Endothelial cell of umbilical vein (primary cell): ENCODE measurements at regions of chr20 and their contacts with region 1.

Region 1: GRCh38 chr20:23340524-23340923 is 10.1 kb upstream of the NXT1 start:
- DNase-seq: peak; percentile 84
- H3K4me3 ChIP-seq: no peak overlapping the region
- H3K27ac ChIP-seq: no peak overlapping the region
- H3K4me1 ChIP-seq: no peaks in the 10 kb centered on the region
- H3K27me3 ChIP-seq: peaks cover 2 to 3% of the 10 kb centered on the region in 2 experiments
- CTCF ChIP-seq: peak; percentile 64 to 71
- POLR2A ChIP-seq: no peak

Region 2: GRCh38 chr20:22339091-22339881 is 1001.2 kb before region 1 on chr20:
- CTCF ChIA-PET with region 1: interaction called, 16 read pairs
- POLR2A ChIA-PET with region 1: no interaction called
- dilution Hi-C with region 1: no loop called
- intact Hi-C with region 1: loop called (anchors 1 kb)
- DNase-seq: peak; percentile 64
- H3K4me3 ChIP-seq: no peak overlapping the region
- H3K27ac ChIP-seq: no peak overlapping the region
- H3K4me1 ChIP-seq: no peaks in the 10 kb centered on the region
- H3K27me3 ChIP-seq: peaks cover 5 to 10% of the 10 kb centered on the region in 2 experiments
- CTCF ChIP-seq: peak; percentile 60 to 61
- POLR2A ChIP-seq: no peak

Region 3: GRCh38 chr20:22700367-22700766 is 640.2 kb before region 1 on chr20:
- CTCF ChIA-PET with region 1: interaction called, 222 read pairs
- POLR2A ChIA-PET with region 1: no interaction called
- dilution Hi-C with region 1: no loop called
- intact Hi-C with region 1: no loop called
- DNase-seq: no peak
- H3K4me3 ChIP-seq: no peak overlapping the region
- H3K27ac ChIP-seq: no peak overlapping the region
- H3K4me1 ChIP-seq: peaks cover 14% of the 10 kb centered on the region
- H3K27me3 ChIP-seq: no peaks in the 10 kb centered on the region
- CTCF ChIP-seq: no peak
- POLR2A ChIP-seq: no peak

Region 4: DNA sequence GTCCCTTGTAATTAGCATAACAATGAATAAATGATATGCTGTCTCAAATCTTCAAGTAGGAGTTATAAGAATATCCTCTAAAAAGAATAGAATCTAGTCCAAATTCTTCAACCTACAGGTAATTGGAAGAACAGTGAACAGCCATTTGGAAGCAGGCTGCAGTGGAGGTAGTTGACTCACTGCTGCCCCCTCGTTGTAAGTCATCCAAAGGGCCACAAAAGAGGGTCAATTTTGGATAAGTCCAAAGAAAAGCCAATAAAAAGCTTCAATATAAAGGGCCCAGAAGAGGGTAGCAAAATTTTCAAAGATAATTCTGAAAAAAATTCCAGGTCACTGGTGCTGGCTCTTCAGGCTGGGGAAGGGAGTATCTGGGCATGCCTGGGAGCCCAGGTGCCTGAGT is 366.2 kb before region 1 on chr20:
- CTCF ChIA-PET with region 1: interaction called, 33 read pairs
- POLR2A ChIA-PET with region 1: no interaction called
- dilution Hi-C with region 1: no loop called
- intact Hi-C with region 1: no loop called
- DNase-seq: peak; percentile 28
- H3K4me3 ChIP-seq: no peak overlapping the region
- H3K27ac ChIP-seq: no peak overlapping the region
- H3K4me1 ChIP-seq: no peaks in the 10 kb centered on the region
- H3K27me3 ChIP-seq: peaks cover 4 to 11% of the 10 kb centered on the region in 2 experiments
- CTCF ChIP-seq: peak; percentile 60 to 64
- POLR2A ChIP-seq: no peak

Region 5: GRCh38 chr20:23235173-23236027 is 105.1 kb before region 1 on chr20:
- CTCF ChIA-PET with region 1: interaction called, 33 read pairs
- POLR2A ChIA-PET with region 1: no interaction called
- dilution Hi-C with region 1: no loop called
- intact Hi-C with region 1: loop called (anchors 1 kb)
- DNase-seq: peak; percentile 72
- H3K4me3 ChIP-seq: no peak overlapping the region
- H3K27ac ChIP-seq: no peak overlapping the region
- H3K4me1 ChIP-seq: peaks cover 5% of the 10 kb centered on the region
- H3K27me3 ChIP-seq: peaks cover 2 to 4% of the 10 kb centered on the region in 2 experiments
- CTCF ChIP-seq: peak; percentile 80 to 85
- POLR2A ChIP-seq: no peak

Region 6: GRCh38 chr20:23270382-23270911 is 70.1 kb before region 1 on chr20:
- CTCF ChIA-PET with region 1: interaction called, 10 read pairs
- POLR2A ChIA-PET with region 1: no interaction called
- dilution Hi-C with region 1: no loop called
- intact Hi-C with region 1: no loop called
- DNase-seq: peak; percentile 83
- H3K4me3 ChIP-seq: no peak overlapping the region
- H3K27ac ChIP-seq: peak overlapping the region; percentile 76
- H3K4me1 ChIP-seq: peaks cover 17% of the 10 kb centered on the region
- H3K27me3 ChIP-seq: no peaks in the 10 kb centered on the region
- CTCF ChIP-seq: no peak
- POLR2A ChIP-seq: no peak